GM10248 (cell line): ENCODE measurements at regions of chr1 and their contacts with region 1.

Region 1: DNA sequence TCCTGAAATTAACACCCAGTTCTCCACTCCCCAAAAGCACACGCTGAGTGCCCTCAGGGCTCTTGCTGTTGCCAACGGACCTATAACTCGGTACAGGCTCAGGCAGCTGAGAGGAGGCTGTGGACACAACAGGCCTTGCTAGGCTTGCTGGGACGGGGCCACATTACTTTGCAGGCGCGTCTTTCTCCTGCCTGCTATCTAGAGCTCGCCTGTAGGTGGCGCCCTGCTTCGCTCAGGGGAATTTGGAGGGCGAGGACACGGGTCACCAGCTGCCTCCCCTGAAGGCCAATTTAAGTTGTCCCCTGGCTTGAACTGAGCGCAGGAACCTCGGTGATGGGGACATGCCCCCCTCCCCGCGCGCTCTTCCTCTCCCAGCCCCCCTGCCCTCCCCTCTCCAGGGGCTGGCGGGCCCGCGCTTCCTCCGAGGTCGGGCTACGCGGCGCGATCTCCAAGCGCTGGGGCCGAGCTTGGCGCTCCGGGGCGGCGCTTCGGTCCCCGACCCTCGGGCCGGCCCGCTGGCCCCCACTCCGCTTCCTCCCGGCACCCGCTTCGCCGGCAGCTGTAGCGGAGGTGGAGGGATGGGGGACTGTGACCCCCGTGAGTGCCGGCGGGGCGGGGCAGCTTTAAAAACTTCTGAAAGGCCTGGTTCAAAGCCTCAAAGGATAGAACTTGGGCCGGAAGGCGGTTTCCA is 32.4 kb upstream of the NFIA start:
- DNase-seq: peak; percentile 73
- CTCF ChIP-seq: peak; percentile 80

Region 2: DNA sequence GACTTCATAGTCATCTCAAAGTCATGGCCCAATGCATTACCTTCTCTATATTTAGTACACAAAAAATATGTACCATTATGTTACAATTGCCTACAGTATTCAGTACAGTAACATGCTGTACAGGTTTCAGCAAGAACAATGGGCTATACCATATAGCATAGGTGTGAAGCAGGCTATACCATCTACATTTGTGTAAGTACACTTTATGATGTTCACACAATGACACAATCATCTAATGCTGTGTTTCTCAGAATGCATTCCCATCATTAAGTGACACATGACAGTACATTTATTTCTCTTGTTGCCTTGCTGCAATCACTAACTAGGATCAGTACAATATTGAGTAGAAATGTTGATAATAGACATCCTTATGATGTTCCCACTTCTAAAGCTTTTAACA is 14.1 kb before region 1 on chr1:
- CTCF ChIA-PET with region 1: interaction called, 13 read pairs
- POLR2A ChIA-PET with region 1: no interaction called
- DNase-seq: no peak
- CTCF ChIP-seq: no peak

Region 3: GRCh38 chr1:61241411-61241838 is 191.4 kb after region 1 on chr1:
- CTCF ChIA-PET with region 1: no interaction called
- POLR2A ChIA-PET with region 1: no interaction called
- DNase-seq: no peak
- CTCF ChIP-seq: no peak